MCF 10A (cell line): ENCODE measurements at regions of chr2 and their contacts with region 1.

Region 1: GRCh38 chr2:9914384-9915065 is 37.0 kb upstream of the GRHL1 start:
- DNase-seq: peak; percentile 92
- H3K4me3 Mint-ChIP-seq: no peak overlapping the region
- H3K27ac Mint-ChIP-seq: peak overlapping the region; percentile 64
- H3K4me1 Mint-ChIP-seq: peaks cover 10% of the 10 kb centered on the region
- H3K27me3 Mint-ChIP-seq: no peaks in the 10 kb centered on the region
- CTCF ChIP-seq: peak; percentile 65

Region 2: DNA sequence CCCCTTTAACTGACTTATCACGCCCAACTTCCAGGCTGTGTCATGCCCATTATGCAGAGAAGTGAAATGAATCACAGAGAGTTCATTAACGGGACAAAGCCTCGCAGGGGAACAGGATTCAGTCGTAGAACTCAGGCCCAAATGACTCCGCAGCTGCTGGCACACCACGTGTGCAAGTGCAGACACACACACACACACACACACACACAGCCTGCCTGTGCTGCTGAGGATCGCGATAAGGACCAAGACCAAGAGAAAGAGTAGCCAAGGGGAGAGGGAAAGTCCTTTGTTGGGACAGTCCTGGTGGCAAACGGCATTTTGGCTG is 161.3 kb before region 1 on chr2:
- CTCF ChIA-PET with region 1: no interaction called
- POLR2A ChIA-PET with region 1: no interaction called
- intact Hi-C with region 1: no loop called
- DNase-seq: peak; percentile 97
- H3K4me3 Mint-ChIP-seq: peak overlapping the region; percentile 69
- H3K27ac Mint-ChIP-seq: peak overlapping the region; percentile 82
- H3K4me1 Mint-ChIP-seq: peaks cover 36% of the 10 kb centered on the region
- H3K27me3 Mint-ChIP-seq: no peaks in the 10 kb centered on the region
- CTCF ChIP-seq: no peak

Region 3: GRCh38 chr2:9805435-9806326 is 108.8 kb before region 1 on chr2:
- CTCF ChIA-PET with region 1: interaction called, 54 read pairs
- POLR2A ChIA-PET with region 1: interaction called, 36 read pairs
- intact Hi-C with region 1: no loop called
- DNase-seq: peak; percentile 31
- H3K4me3 Mint-ChIP-seq: no peak overlapping the region
- H3K27ac Mint-ChIP-seq: no peak overlapping the region
- H3K4me1 Mint-ChIP-seq: peaks cover 26% of the 10 kb centered on the region
- H3K27me3 Mint-ChIP-seq: no peaks in the 10 kb centered on the region
- CTCF ChIP-seq: no peak